ENCODE measurements at regions of chr16 and their contacts with region 1.

Region 1: DNA sequence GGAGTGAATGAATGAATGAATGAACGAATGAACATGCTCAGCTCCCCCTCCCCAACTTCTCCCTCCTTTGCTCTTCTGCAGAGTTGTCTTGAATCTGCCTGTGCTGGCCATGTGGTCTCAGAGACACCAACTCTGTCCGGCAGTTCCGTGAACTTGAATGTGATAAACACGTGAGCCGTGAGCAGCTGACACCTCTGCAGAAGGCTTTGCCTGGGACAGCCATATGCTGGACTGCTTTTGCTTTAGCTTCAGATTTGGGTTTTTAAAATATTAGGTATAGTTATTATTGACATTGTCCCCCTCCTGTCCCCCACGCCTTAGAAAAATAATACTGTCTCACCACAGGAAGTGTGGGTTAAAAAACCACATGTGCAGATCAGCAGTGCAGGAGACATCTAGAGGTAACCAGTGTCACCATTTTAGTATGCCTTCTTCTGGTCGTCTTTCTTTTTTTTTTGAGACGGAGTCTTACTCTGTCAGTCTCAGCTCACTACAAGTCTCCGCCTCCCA is 83.8 kb downstream of the ABCC1 start:
- DNase-seq: no peak
- H3K4me3 ChIP-seq: no peak overlapping the region
- H3K27ac ChIP-seq: no peak overlapping the region
- H3K4me1 ChIP-seq: no peaks in the 10 kb centered on the region
- H3K27me3 ChIP-seq: no peaks in the 10 kb centered on the region
- CTCF ChIP-seq: no peak

Region 2: GRCh38 chr16:15732416-15732815 is 300.8 kb before region 1 on chr16:
- CTCF ChIA-PET with region 1: no interaction called
- dilution Hi-C with region 1: loop called (anchors 5 kb)
- in situ Hi-C with region 1: no loop called
- intact Hi-C with region 1: no loop called
- DNase-seq: no peak
- H3K4me3 ChIP-seq: no peak overlapping the region
- H3K27ac ChIP-seq: no peak overlapping the region
- H3K4me1 ChIP-seq: no peaks in the 10 kb centered on the region
- H3K27me3 ChIP-seq: no peaks in the 10 kb centered on the region
- CTCF ChIP-seq: no peak

Region 3: GRCh38 chr16:15993946-15994665 is 39.2 kb before region 1 on chr16:
- CTCF ChIA-PET with region 1: no interaction called
- dilution Hi-C with region 1: loop called (anchors 5 kb)
- in situ Hi-C with region 1: no loop called
- intact Hi-C with region 1: no loop called
- DNase-seq: no peak
- H3K4me3 ChIP-seq: no peak overlapping the region
- H3K27ac ChIP-seq: no peak overlapping the region
- H3K4me1 ChIP-seq: peaks cover 17% of the 10 kb centered on the region
- H3K27me3 ChIP-seq: no peaks in the 10 kb centered on the region
- CTCF ChIP-seq: no peak

Region 4: DNA sequence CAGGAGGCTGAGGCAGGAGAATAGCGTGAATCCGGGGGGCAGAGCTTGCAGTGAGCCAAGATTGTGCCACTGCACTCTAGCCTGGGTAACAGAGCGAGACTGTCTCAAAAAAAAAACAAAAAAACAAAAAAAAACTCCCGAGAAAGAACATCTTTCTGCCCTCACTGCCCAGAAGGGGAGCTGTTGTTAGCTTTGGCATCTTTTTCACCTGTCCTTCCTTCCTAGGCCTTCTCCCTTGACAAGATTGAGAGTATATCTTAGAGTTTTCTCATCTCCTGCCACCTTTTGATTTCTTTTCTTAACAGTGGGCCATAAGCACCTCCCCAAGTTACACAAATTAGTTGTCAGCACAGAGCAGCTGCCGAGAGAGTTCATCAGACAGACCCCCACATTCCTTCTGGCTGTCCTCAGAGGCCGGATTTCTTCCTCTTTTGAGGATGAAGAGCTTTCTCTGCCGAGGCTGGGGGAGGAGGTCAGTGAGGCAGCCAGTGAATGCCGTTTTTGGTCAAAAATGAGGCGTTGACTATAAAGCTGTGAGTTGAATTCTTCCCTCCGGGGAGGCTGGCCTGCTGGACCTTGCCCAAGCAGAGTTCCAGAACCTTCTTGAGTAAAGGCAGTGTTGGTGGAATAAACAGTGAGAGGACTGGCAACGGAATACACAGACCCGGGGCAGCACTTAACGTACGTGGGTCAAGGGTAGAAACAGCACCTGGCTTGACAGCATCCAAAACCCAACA is 63.0 kb after region 1 on chr16:
- CTCF ChIA-PET with region 1: no interaction called
- dilution Hi-C with region 1: no loop called
- in situ Hi-C with region 1: no loop called
- intact Hi-C with region 1: no loop called
- DNase-seq: no peak
- H3K4me3 ChIP-seq: no peak overlapping the region
- H3K27ac ChIP-seq: no peak overlapping the region
- H3K4me1 ChIP-seq: no peaks in the 10 kb centered on the region
- H3K27me3 ChIP-seq: no peaks in the 10 kb centered on the region
- CTCF ChIP-seq: peak; percentile 18 to 25

Measured in mammary epithelial cell (primary cell).